ENCODE measurements at regions of chr2 and their contacts with region 1.

Region 1: GRCh38 chr2:235050992-235051351 is 99.2 kb downstream of the SH3BP4 start:
- DNase-seq: peak; percentile 89 to 97
- H3K4me3 ChIP-seq: no peak overlapping the region
- H3K27ac ChIP-seq: peak overlapping the region; percentile 74
- H3K4me1 ChIP-seq: peaks cover 57% of the 10 kb centered on the region
- H3K27me3 ChIP-seq: no peaks in the 10 kb centered on the region
- CTCF ChIP-seq: no peak; the same call in 1 of the 2 replicates

Region 2: DNA sequence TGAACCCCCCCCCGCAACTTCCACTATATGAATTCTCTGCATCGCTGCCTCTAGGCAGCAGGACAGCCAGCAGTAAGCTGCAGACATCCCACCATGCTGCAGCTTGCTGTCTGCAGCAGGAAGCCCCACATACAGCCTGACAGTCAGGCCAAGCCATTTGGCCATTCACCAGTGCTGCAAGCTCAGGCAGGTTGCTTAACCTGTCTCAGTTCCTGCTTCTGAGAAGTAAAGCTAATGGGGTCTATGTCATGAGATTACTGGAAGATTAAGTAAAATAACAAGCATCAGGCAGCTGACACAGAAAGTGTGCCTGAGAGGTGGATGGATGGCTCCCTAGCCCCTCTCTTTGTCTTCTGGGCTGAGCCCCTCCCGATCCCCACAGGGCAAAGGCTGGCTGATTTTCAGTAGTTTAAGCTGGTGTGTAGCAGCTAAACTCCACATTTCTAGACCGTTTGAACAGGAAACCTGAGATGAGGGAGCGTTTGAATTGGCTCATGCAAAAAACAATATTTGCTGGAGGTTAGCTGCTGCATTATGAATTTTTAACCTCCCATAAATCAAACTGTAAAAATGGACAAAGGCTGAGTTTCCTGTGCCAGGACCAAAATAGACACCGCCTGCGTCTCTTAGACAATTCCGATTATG is 360.3 kb before region 1 on chr2:
- CTCF ChIA-PET with region 1: no interaction called
- POLR2A ChIA-PET with region 1: no interaction called
- intact Hi-C with region 1: loop called (anchors 5 kb)
- DNase-seq: peak in 1 of 2 experiments; percentile 43
- H3K4me3 ChIP-seq: no peak overlapping the region
- H3K27ac ChIP-seq: no peak overlapping the region
- H3K4me1 ChIP-seq: peaks cover 59% of the 10 kb centered on the region
- H3K27me3 ChIP-seq: no peaks in the 10 kb centered on the region
- CTCF ChIP-seq: no peak

Region 3: GRCh38 chr2:234840336-234840735 is 210.6 kb before region 1 on chr2:
- CTCF ChIA-PET with region 1: no interaction called
- POLR2A ChIA-PET with region 1: interaction called, 5 read pairs
- intact Hi-C with region 1: loop called (anchors 2 kb)
- DNase-seq: peak; percentile 86 to 92
- H3K4me3 ChIP-seq: no peak overlapping the region
- H3K27ac ChIP-seq: peak overlapping the region; percentile 63
- H3K4me1 ChIP-seq: peaks cover 38% of the 10 kb centered on the region
- H3K27me3 ChIP-seq: no peaks in the 10 kb centered on the region
- CTCF ChIP-seq: no peak

Region 4: DNA sequence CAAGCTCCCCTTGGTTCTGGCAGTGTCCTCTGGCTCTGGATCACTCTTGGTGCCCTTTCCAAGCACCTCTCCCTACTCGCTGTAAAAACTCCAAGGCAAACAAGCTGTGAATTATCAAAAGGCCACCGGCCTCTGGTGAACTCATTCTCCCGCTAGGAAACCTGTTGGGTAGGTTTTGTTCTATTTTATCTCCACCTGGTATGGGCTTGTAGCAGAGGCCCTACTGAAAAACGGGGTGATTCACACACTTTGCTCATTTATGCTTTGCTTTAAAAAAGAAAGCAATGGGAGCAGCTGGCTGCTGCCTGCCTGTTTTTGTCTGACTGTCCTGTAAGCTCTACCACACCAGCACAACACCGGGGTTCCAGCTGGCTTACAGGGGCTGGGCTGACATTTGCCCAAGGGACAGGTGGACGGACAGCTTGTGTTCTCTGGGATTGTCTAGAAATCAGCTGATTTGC is 42.4 kb before region 1 on chr2:
- CTCF ChIA-PET with region 1: interaction called, 5 read pairs
- POLR2A ChIA-PET with region 1: interaction called, 4 read pairs
- intact Hi-C with region 1: loop called (anchors 1 kb)
- DNase-seq: peak; percentile 83 to 99
- H3K4me3 ChIP-seq: peak overlapping the region; percentile 36
- H3K27ac ChIP-seq: peak overlapping the region; percentile 89
- H3K4me1 ChIP-seq: peaks cover 65% of the 10 kb centered on the region
- H3K27me3 ChIP-seq: no peaks in the 10 kb centered on the region
- CTCF ChIP-seq: no peak

Region 5: DNA sequence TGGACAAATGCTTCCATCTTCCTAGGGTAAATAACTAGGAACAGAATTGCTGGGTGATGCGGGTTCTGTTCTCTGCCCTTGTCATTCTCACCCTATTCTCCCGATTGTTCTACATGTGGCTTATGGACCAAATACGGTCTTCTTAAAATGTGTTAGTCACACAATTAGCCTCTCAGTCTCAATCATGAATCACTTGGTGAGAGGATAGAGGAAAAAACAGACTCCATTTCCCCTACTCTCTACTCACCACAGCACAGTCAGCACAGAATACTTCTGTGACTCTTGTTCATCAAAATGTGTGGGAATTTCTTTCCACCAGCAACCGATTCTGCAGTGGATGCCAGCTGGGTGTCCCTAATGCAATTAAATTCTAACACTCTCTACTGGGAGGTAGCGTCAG is 26.1 kb after region 1 on chr2:
- CTCF ChIA-PET with region 1: no interaction called
- POLR2A ChIA-PET with region 1: no interaction called
- intact Hi-C with region 1: no loop called
- DNase-seq: no peak
- H3K4me3 ChIP-seq: no peak overlapping the region
- H3K27ac ChIP-seq: no peak overlapping the region
- H3K4me1 ChIP-seq: no peaks in the 10 kb centered on the region
- H3K27me3 ChIP-seq: no peaks in the 10 kb centered on the region
- CTCF ChIP-seq: no peak

Measured in PC-9 (cell line).